ENCODE measurements at regions of chr6 and their contacts with region 1.

Region 1: GRCh38 chr6:83067448-83068413 is at the start of gene DOP1A:
- DNase-seq: peak; percentile 90 to 98 (median 95)
- ATAC-seq: peak; percentile 88 to 92 (median 90)
- H3K4me3 ChIP-seq: peak within 1 kb of the TSS; percentile 86 to 91
- H3K4me3 Mint-ChIP-seq: peak within 1 kb of the TSS; percentile 90 to 93 (median 91)
- H3K27ac ChIP-seq: peak within 1 kb of the TSS; percentile 82
- H3K27ac Mint-ChIP-seq: peak within 1 kb of the TSS; percentile 88 to 91
- H3K4me1 ChIP-seq: peaks cover 8 to 22% of the 10 kb centered on the region in 2 experiments
- H3K4me1 Mint-ChIP-seq: peaks cover 37 to 63% (median 54%) of the 10 kb centered on the region in 3 donors
- H3K27me3 ChIP-seq: no peaks in the 10 kb centered on the region
- H3K27me3 Mint-ChIP-seq: no peaks in the 10 kb centered on the region
- total RNA-seq, gene DOP1A: 19.0 to 26.8 (median 25.5) TPM

Region 2: DNA sequence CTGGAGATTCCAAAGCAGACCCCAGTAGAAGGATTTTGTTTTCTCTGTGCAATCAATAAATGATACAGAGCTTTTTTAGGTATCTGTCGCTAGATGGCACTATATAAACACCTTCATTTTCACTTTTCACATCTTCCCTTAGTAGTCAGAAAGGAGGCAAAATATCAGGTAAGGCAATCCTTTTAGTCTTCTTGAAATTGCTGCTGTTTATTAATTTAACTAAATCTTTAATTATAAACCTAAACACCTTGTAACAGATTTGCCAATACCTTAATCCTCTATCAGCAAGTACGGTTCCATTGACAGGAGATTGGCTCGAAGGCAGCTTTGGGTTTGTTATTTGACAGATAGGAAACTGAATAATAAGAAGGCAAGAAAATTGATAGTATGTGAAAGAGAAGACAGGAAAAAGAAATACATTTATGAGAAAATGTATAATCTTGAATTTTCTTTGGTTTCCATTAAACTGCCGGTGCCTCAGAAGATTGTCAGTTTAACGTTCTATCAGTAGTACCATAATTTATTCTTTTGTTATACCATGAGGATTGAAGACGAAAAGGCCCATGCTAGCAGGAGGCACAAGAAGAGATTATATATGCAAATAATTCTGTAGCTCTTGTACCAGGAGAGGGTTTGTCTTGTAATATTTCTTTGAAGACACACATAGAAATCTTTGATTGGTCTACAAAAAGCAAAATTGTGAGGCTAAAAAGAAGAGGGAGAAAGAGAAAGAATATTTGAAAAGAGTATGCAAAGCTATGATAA is 796.7 kb before region 1 on chr6:
- CTCF ChIA-PET with region 1: interaction called, 18 to 47 read pairs
- POLR2A ChIA-PET with region 1: no interaction called
- DNase-seq: peak in 1 of 35 experiments; percentile 53
- ATAC-seq: peak in 2 of 4 experiments; percentile 40 to 46
- H3K4me3 ChIP-seq: no peak overlapping the region
- H3K4me3 Mint-ChIP-seq: no peak overlapping the region
- H3K27ac ChIP-seq: no peak overlapping the region
- H3K27ac Mint-ChIP-seq: no peak overlapping the region
- H3K4me1 ChIP-seq: no peaks in the 10 kb centered on the region
- H3K4me1 Mint-ChIP-seq: no peaks in the 10 kb centered on the region
- H3K27me3 ChIP-seq: no peaks in the 10 kb centered on the region
- H3K27me3 Mint-ChIP-seq: peaks cover 0 to 3% of the 10 kb centered on the region in 2 donors

Region 3: GRCh38 chr6:82959385-82959941 is 108.3 kb before region 1 on chr6:
- CTCF ChIA-PET with region 1: no interaction called
- POLR2A ChIA-PET with region 1: no interaction called
- DNase-seq: no peak
- ATAC-seq: no peak
- H3K4me3 ChIP-seq: no peak overlapping the region
- H3K4me3 Mint-ChIP-seq: no peak overlapping the region
- H3K27ac ChIP-seq: no peak overlapping the region
- H3K27ac Mint-ChIP-seq: no peak overlapping the region
- H3K4me1 ChIP-seq: no peaks in the 10 kb centered on the region
- H3K4me1 Mint-ChIP-seq: no peaks in the 10 kb centered on the region
- H3K27me3 ChIP-seq: no peaks in the 10 kb centered on the region
- H3K27me3 Mint-ChIP-seq: no peaks in the 10 kb centered on the region

Region 4: GRCh38 chr6:82995066-82995465 is 72.7 kb before region 1 on chr6:
- CTCF ChIA-PET with region 1: no interaction called
- POLR2A ChIA-PET with region 1: no interaction called
- DNase-seq: no peak
- ATAC-seq: no peak
- H3K4me3 ChIP-seq: no peak overlapping the region
- H3K4me3 Mint-ChIP-seq: no peak overlapping the region
- H3K27ac ChIP-seq: no peak overlapping the region
- H3K27ac Mint-ChIP-seq: no peak overlapping the region
- H3K4me1 ChIP-seq: no peaks in the 10 kb centered on the region
- H3K4me1 Mint-ChIP-seq: no peaks in the 10 kb centered on the region
- H3K27me3 ChIP-seq: no peaks in the 10 kb centered on the region
- H3K27me3 Mint-ChIP-seq: no peaks in the 10 kb centered on the region

Region 5: GRCh38 chr6:83117802-83118201 is 50.1 kb after region 1 on chr6:
- CTCF ChIA-PET with region 1: interaction called, 4 to 12 read pairs
- POLR2A ChIA-PET with region 1: interaction called in 1 of 2 experiments, 3 read pairs
- DNase-seq: no peak
- ATAC-seq: no peak
- H3K4me3 ChIP-seq: no peak overlapping the region
- H3K4me3 Mint-ChIP-seq: no peak overlapping the region
- H3K27ac ChIP-seq: no peak overlapping the region
- H3K27ac Mint-ChIP-seq: no peak overlapping the region
- H3K4me1 ChIP-seq: no peaks in the 10 kb centered on the region
- H3K4me1 Mint-ChIP-seq: no peaks in the 10 kb centered on the region
- H3K27me3 ChIP-seq: no peaks in the 10 kb centered on the region
- H3K27me3 Mint-ChIP-seq: no peaks in the 10 kb centered on the region

Region 6: GRCh38 chr6:83215131-83216047 is 147.7 kb after region 1 on chr6:
- CTCF ChIA-PET with region 1: interaction called, 9 to 52 read pairs
- POLR2A ChIA-PET with region 1: interaction called, 3 read pairs
- DNase-seq: peak in 34 of 35 experiments; percentile 7 to 72 (median 37)
- ATAC-seq: peak; percentile 85 to 98 (median 89)
- H3K4me3 ChIP-seq: no peak overlapping the region
- H3K4me3 Mint-ChIP-seq: no peak overlapping the region
- H3K27ac ChIP-seq: no peak overlapping the region
- H3K27ac Mint-ChIP-seq: no peak overlapping the region
- H3K4me1 ChIP-seq: no peaks in the 10 kb centered on the region
- H3K4me1 Mint-ChIP-seq: no peaks in the 10 kb centered on the region
- H3K27me3 ChIP-seq: peaks cover 0 to 3% of the 10 kb centered on the region in 2 experiments
- H3K27me3 Mint-ChIP-seq: peaks cover 11 to 17% of the 10 kb centered on the region in 2 donors

Region 7: DNA sequence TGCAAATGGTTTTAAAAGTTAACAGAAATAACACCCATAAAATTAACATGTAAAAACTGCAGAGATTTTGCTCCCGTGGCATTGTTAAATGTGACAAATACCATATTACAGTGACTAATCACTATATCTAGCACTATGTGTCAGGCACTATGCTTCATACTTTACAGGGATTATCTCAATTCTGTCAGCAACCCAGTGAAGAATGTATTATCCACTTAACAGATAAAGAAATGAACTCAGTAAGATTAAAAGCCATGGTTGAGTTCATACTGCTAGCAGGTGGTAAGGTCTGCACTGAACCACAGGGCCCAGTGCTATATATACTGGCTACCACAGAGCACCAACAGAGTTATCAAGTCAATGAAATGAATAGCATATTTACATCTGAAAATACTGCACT is 190.8 kb after region 1 on chr6:
- CTCF ChIA-PET with region 1: no interaction called
- POLR2A ChIA-PET with region 1: no interaction called
- DNase-seq: no peak
- ATAC-seq: no peak
- H3K4me3 ChIP-seq: no peak overlapping the region
- H3K4me3 Mint-ChIP-seq: no peak overlapping the region
- H3K27ac ChIP-seq: no peak overlapping the region
- H3K27ac Mint-ChIP-seq: no peak overlapping the region
- H3K4me1 ChIP-seq: no peaks in the 10 kb centered on the region
- H3K4me1 Mint-ChIP-seq: no peaks in the 10 kb centered on the region
- H3K27me3 ChIP-seq: no peaks in the 10 kb centered on the region
- H3K27me3 Mint-ChIP-seq: peaks cover 4 to 9% of the 10 kb centered on the region in 2 donors

Region 8: DNA sequence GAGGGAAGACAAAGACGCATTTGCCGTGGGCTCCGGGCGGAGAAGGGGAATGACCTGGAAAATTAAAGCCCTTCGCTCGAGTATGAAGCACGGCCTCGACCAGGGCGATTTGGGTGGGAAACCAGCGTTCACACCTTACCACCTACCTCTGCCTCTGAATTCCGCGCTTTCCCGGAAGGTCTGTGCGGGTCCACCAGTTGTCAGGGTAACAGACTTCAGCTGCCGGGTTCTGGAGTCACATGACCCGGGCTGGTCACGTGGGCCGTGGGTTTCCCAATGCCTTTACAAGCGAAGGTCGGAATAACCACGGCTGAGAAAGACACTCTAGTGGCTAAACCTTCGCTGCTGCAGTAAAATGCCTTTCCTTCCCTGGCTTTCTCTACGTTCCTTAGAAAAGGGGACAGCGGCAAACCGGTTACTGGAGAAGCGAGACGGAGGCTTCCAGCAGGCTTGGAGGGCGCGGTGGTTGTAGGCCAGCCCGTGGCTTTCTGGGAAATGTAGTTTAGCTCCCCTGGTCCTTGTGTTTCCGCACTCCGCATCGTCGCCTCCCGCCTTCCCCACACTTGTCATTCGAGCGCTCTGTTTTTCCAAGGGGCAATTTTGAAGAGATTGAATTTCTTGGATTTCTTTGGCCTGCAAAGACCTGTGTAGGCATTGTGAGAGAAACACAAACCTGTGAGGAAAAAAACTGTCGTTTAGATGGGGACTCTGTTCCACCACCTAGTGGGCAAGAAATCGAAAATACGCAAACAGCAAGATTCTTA is 1159.9 kb after region 1 on chr6 and contains the start of gene CEP162:
- CTCF ChIA-PET with region 1: interaction called in 1 of 2 experiments, 26 read pairs
- POLR2A ChIA-PET with region 1: interaction called in 1 of 2 experiments, 3 read pairs
- DNase-seq: peak; percentile 75 to 96 (median 87)
- ATAC-seq: peak; percentile 92 to 94 (median 92)
- H3K4me3 ChIP-seq: peak within 1 kb of the TSS; percentile 83 to 100
- H3K4me3 Mint-ChIP-seq: peak within 1 kb of the TSS; percentile 89 to 96 (median 96)
- H3K27ac ChIP-seq: peak within 1 kb of the TSS; percentile 54
- H3K27ac Mint-ChIP-seq: peak within 1 kb of the TSS; percentile 94 to 97
- H3K4me1 ChIP-seq: peaks cover 5 to 6% of the 10 kb centered on the region in 2 experiments
- H3K4me1 Mint-ChIP-seq: peaks cover 21 to 36% (median 22%) of the 10 kb centered on the region in 3 donors
- H3K27me3 ChIP-seq: peaks cover 0 to 2% of the 10 kb centered on the region in 2 experiments
- H3K27me3 Mint-ChIP-seq: peaks cover 6% of the 10 kb centered on the region in 2 donors
- total RNA-seq, gene CEP162: 7.4 to 9.8 (median 7.6) TPM